CD4-positive, alpha-beta memory T cell (primary cell): ENCODE measurements at regions of chr5 and their contacts with region 1.

Region 1: DNA sequence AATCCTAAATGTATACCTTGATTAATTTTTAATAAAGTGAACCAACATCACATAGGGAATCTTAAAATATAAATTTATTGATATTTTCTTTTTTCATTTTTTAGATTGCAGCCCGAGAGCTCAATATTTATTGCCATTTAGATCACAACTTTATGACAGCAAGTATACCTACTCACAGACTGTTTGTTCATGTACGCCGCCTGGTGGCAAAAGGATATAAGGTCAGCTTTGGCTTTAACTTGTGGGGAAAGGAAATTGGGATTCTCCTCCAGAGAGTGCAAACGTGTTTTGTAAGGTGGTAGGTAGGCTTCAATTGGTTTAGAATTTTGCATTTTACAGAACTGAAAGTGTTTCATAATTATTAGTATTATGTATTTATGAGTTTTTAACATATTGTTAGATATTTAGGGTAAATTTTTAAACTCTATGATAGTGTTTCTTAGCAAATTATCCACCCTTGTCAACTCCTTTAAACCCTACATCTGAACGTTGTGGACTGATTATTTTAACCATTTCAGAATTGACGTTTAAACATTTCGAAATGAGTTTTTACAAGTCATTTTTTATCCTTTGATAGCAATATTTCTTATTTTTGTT is 17.5 kb upstream of the DHFR start:
- DNase-seq: peak; percentile 51 to 63 (median 53)
- H3K4me3 ChIP-seq: no peak overlapping the region
- H3K4me3 Mint-ChIP-seq: no peak overlapping the region
- H3K27ac ChIP-seq: no peak overlapping the region
- H3K27ac Mint-ChIP-seq: no peak overlapping the region
- H3K4me1 ChIP-seq: no peaks in the 10 kb centered on the region
- H3K4me1 Mint-ChIP-seq: peaks cover 0 to 10% (median 5%) of the 10 kb centered on the region in 4 donors
- H3K27me3 ChIP-seq: no peaks in the 10 kb centered on the region
- H3K27me3 Mint-ChIP-seq: no peaks in the 10 kb centered on the region

Region 2: DNA sequence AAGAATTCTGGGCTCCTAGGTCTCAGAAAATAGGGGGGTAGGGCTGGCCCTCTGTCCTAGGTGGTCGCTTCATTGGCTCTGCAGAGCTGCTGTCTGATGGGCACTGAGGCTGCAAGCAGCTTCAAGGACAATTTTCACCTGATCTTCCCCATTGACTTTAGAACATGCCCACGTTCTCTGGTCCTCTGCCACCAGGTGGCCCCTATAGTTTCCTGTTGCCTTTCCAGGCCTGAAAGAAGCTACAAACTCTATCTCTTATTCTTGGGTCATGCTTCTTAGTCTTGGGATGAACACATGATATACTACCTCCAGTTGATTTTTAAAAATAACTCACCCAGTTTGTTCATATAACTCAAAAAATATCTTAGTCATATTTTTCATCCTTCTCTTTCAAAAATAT is 326.2 kb before region 1 on chr5:
- CTCF ChIA-PET with region 1: interaction called, 5 read pairs
- POLR2A ChIA-PET with region 1: no interaction called
- intact Hi-C with region 1: loop called (anchors 1 kb)
- DNase-seq: peak in 4 of 5 donors; percentile 18 to 29 (median 23)
- H3K4me3 ChIP-seq: no peak overlapping the region
- H3K4me3 Mint-ChIP-seq: no peak overlapping the region
- H3K27ac ChIP-seq: no peak overlapping the region
- H3K27ac Mint-ChIP-seq: no peak overlapping the region
- H3K4me1 ChIP-seq: no peaks in the 10 kb centered on the region
- H3K4me1 Mint-ChIP-seq: peaks cover 0 to 2% (median 0%) of the 10 kb centered on the region in 4 donors
- H3K27me3 ChIP-seq: no peaks in the 10 kb centered on the region
- H3K27me3 Mint-ChIP-seq: peaks cover 3 to 10% of the 10 kb centered on the region in 2 donors

Region 3: DNA sequence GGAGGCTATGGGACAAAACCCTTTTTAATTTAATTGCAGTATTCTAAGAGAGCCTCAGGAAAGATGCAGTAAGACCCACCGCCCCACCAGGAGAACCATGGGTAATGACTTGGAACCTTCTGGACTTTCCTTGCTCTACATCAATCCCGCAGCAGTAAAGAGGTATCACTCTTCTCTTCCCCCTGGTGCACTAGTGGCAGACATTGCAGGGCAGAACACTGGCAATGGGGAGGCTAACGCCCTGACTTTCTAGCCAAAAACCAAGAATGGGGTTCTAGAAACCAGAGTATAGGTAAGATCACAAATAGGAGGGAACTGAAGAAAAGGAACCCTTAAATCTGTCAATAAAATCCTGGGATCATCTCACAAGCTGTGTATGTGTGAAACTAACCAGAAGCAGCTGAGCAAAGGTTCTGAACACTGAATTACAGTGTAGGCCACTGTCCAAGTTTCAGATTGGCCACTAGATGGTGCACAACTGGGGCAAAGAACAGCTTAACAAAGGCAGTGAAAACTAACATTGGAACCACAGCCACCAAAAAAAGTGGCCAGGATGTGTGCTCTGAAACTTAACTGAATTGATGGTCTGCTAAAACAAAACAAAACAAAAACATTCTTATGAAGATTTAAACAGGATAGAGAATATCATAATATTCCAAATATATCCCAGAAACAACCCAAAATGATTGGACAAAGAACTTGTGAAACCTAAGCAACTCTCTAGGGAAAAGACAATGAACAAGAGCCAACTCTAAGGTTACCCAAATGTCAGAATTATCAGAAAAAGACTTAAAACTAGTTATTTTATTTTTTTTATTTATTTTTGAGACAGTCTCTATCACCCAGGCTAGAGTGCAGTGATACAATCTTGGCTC is 191.0 kb before region 1 on chr5:
- CTCF ChIA-PET with region 1: interaction called, 4 read pairs
- POLR2A ChIA-PET with region 1: no interaction called
- intact Hi-C with region 1: loop called (anchors 1 kb)
- DNase-seq: peak in 4 of 5 donors; percentile 16 to 31 (median 23)
- H3K4me3 ChIP-seq: no peak overlapping the region
- H3K4me3 Mint-ChIP-seq: no peak overlapping the region
- H3K27ac ChIP-seq: no peak overlapping the region
- H3K27ac Mint-ChIP-seq: no peak overlapping the region
- H3K4me1 ChIP-seq: no peaks in the 10 kb centered on the region
- H3K4me1 Mint-ChIP-seq: peaks cover 0 to under 1% (median under 1%) of the 10 kb centered on the region in 4 donors
- H3K27me3 ChIP-seq: no peaks in the 10 kb centered on the region
- H3K27me3 Mint-ChIP-seq: no peaks in the 10 kb centered on the region

Region 4: DNA sequence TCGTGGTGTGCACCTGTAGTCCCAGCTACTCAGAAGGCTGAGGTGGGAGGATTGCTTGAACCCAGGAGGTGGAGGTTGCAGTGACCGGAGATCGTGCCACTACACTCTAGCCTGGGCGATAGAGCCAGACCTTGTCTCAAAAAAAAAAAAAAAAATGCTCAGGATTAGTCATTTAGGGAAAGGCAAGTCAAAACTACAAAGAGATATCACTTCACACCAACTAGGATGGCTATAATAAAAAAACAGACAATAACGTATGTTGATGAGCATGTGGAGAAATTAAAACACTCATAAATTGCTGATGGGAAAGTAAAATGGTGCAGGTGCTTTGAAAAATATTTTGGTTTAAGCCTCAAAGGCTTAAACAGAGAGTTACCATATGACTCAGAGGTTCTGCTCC is 95.9 kb before region 1 on chr5:
- CTCF ChIA-PET with region 1: no interaction called
- POLR2A ChIA-PET with region 1: no interaction called
- intact Hi-C with region 1: no loop called
- DNase-seq: no peak
- H3K4me3 ChIP-seq: no peak overlapping the region
- H3K4me3 Mint-ChIP-seq: no peak overlapping the region
- H3K27ac ChIP-seq: no peak overlapping the region
- H3K27ac Mint-ChIP-seq: no peak overlapping the region
- H3K4me1 ChIP-seq: no peaks in the 10 kb centered on the region
- H3K4me1 Mint-ChIP-seq: peaks cover 0 to 5% (median 0%) of the 10 kb centered on the region in 4 donors
- H3K27me3 ChIP-seq: peaks cover 5% of the 10 kb centered on the region
- H3K27me3 Mint-ChIP-seq: peaks cover 24 to 28% of the 10 kb centered on the region in 2 donors

Region 5: GRCh38 chr5:80697100-80697499 is 24.9 kb after region 1 on chr5:
- CTCF ChIA-PET with region 1: no interaction called
- POLR2A ChIA-PET with region 1: no interaction called
- intact Hi-C with region 1: no loop called
- DNase-seq: no peak
- H3K4me3 ChIP-seq: no peak overlapping the region
- H3K4me3 Mint-ChIP-seq: no peak overlapping the region
- H3K27ac ChIP-seq: no peak overlapping the region
- H3K27ac Mint-ChIP-seq: peak overlapping the region in 1 of 7 donors; percentile 55
- H3K4me1 ChIP-seq: no peaks in the 10 kb centered on the region
- H3K4me1 Mint-ChIP-seq: peaks cover 4 to 11% (median 5%) of the 10 kb centered on the region in 4 donors
- H3K27me3 ChIP-seq: no peaks in the 10 kb centered on the region
- H3K27me3 Mint-ChIP-seq: no peaks in the 10 kb centered on the region